ENCODE measurements at regions of chr2 and their contacts with region 1.

Region 1: GRCh38 chr2:227942021-227942420 is 70.6 kb downstream of the DAW1 start:
- DNase-seq: no peak
- ATAC-seq: no peak
- H3K4me3 ChIP-seq: no peak overlapping the region
- H3K4me3 Mint-ChIP-seq: no peak overlapping the region
- H3K27ac ChIP-seq: no peak overlapping the region
- H3K27ac Mint-ChIP-seq: no peak overlapping the region
- H3K4me1 ChIP-seq: no peaks in the 10 kb centered on the region
- H3K4me1 Mint-ChIP-seq: no peaks in the 10 kb centered on the region
- H3K27me3 ChIP-seq: no peaks in the 10 kb centered on the region
- H3K27me3 Mint-ChIP-seq: peaks cover 3 to 5% of the 10 kb centered on the region in 2 donors

Region 2: DNA sequence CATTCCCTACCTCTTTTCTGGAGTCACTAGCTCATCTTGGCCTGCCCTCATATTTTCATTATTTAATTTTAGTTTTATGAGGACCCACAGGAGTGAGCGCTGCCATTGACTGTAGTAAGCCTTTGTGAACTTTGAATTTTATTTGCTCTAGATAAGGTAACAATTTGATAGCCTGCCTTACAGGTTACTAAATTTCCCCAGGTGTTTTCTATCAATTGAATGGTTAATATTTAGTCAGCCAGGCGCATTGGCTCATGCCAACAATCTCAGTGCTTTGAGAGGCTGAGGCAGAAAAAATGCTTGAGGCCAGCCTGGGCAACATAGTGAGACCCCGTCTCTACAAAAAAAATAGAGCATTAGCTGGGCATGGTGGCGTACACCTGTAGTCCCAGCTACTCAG is 20.4 kb before region 1 on chr2:
- CTCF ChIA-PET with region 1: no interaction called
- POLR2A ChIA-PET with region 1: no interaction called
- DNase-seq: no peak
- ATAC-seq: no peak
- H3K4me3 ChIP-seq: no peak overlapping the region
- H3K4me3 Mint-ChIP-seq: no peak overlapping the region
- H3K27ac ChIP-seq: no peak overlapping the region
- H3K27ac Mint-ChIP-seq: no peak overlapping the region
- H3K4me1 ChIP-seq: no peaks in the 10 kb centered on the region
- H3K4me1 Mint-ChIP-seq: no peaks in the 10 kb centered on the region
- H3K27me3 ChIP-seq: no peaks in the 10 kb centered on the region
- H3K27me3 Mint-ChIP-seq: peaks cover 10 to 15% of the 10 kb centered on the region in 2 donors

Region 3: GRCh38 chr2:228118940-228119339 is 176.9 kb after region 1 on chr2:
- CTCF ChIA-PET with region 1: no interaction called
- POLR2A ChIA-PET with region 1: interaction called in 1 of 2 experiments, 10 read pairs
- DNase-seq: no peak
- ATAC-seq: no peak
- H3K4me3 ChIP-seq: no peak overlapping the region
- H3K4me3 Mint-ChIP-seq: no peak overlapping the region
- H3K27ac ChIP-seq: no peak overlapping the region
- H3K27ac Mint-ChIP-seq: no peak overlapping the region
- H3K4me1 ChIP-seq: no peaks in the 10 kb centered on the region
- H3K4me1 Mint-ChIP-seq: no peaks in the 10 kb centered on the region
- H3K27me3 ChIP-seq: no peaks in the 10 kb centered on the region
- H3K27me3 Mint-ChIP-seq: no peaks in the 10 kb centered on the region

Measured in T-cell (primary cell).